Ovary (tissue), 10 donors: ENCODE measurements at regions of chr5 and their contacts with region 1.

Region 1: DNA sequence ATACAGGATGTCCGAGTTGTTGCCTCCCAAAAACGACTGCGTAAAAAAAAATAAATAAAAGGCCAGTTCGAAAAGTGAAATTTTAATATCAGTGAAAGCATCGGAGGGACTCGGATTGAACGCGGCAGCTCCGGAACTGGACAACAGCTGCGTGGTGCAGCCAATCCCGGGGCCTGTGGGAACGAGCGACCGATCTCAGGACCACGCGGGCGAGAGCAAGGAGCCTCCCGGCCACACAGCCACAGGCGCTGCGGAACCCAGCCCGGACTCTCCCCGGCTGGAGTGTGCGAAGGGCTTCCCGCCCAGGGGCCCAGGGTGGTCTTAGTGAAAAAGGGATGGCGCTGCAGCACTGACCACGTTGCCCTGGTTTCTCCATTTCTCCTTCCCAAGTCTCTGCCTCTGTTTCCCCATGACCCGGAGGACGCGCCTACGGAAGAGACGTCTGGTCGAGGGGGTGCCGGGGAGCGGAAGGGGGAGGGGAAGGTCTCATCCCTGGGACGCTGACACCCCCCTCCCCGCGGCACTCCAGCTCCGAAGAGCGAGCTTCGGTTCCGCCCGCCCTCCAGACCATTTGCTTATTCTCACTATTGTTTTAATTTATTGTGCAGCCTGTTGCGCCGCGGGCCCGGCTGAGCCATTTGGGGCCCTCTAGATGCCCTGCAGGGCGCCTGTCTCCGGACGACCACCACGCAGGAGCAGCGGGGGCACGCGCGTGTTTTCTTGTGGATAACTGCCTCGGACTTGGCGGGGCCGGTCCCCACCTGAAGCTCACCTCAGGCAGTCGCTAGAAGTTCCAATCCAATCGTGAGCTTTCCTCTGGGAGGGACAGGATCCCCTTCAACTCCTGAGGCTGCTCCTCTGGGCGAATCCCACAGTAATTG is 303.0 kb downstream of the PARP8 start:
- DNase-seq: no peak
- H3K4me3 ChIP-seq: no peak overlapping the region
- H3K27ac ChIP-seq: no peak overlapping the region
- H3K4me1 ChIP-seq: peaks cover 5% of the 10 kb centered on the region
- H3K27me3 ChIP-seq: no peaks in the 10 kb centered on the region
- CTCF ChIP-seq: no peak
- EP300 ChIP-seq: no peak
- POLR2A ChIP-seq: no peak

Region 2: DNA sequence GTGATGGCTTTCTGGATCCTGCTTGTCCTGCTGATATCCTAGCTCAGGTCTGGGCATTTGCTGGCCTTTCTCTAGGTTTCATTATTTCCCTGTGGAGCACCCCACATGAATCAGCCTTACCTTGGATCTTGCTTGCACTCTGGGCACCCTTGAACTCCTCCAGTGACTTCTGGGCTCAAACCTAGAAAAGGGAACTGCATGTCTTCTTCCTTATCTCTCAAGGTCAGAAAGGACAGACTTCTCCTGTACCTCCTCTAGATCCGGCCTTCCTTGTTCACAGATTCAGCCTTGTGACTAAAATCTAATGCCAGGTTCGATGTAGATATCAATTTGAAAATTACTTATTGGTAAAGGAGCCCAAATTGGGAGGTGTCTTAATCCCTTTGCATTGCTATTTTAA is 35.0 kb before region 1 on chr5:
- intact Hi-C with region 1: loop called in 1 of 4 experiments (anchors 1 kb)
- DNase-seq: no peak
- H3K4me3 ChIP-seq: no peak overlapping the region
- H3K27ac ChIP-seq: no peak overlapping the region
- H3K4me1 ChIP-seq: no peaks in the 10 kb centered on the region
- H3K27me3 ChIP-seq: no peaks in the 10 kb centered on the region
- CTCF ChIP-seq: no peak
- EP300 ChIP-seq: no peak
- POLR2A ChIP-seq: no peak